OCI-LY7 (cell line): ENCODE measurements at regions of chr4 and their contacts with region 1.

Region 1: DNA sequence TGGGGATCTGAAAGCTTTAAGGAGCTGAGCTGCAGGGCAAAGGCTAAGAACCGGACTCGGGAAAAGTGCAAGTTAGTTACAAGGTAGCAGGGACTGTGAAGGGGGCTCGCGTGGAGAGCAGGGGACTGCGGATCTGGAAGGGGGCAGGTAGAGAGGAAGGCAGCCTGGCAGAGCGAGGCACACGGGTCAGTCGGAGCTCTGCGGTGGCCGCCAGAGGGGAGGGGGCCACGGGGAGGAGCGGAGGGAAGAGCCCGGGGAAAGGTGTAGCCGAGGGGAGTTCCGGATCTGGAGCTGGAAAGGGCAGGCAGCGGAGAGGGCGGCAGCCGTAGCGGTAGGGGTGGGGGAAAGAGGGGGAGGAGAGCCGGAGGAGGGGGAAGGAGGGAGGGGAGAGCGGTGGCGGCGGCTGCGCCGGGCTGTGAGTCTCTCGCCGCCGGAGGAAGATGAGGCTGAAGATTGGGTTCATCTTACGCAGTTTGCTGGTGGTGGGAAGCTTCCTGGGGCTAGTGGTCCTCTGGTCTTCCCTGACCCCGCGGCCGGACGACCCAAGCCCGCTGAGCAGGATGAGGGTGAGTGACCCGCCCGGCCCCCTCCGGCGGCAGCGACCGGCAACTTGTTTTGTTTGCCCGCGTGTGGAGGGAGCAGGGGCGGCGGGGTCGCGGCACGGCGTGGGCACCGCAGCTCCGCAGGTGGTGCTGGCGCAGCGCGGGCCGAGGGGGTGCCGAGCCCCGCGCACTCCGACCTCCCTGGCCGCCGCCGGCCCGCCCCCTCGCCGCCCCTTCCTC is at the start of gene GALNT7:
- DNase-seq: peak; percentile 74
- H3K4me3 ChIP-seq: peak within 1 kb of the TSS; percentile 79
- H3K27ac ChIP-seq: peak within 1 kb of the TSS; percentile 84
- H3K4me1 ChIP-seq: peaks cover 27% of the 10 kb centered on the region
- CTCF ChIP-seq: no peak
- total RNA-seq, gene GALNT7: 20.3 and 24.8 TPM in 2 replicates

Region 2: GRCh38 chr4:172982151-172982590 is 186.4 kb before region 1 on chr4:
- CTCF ChIA-PET with region 1: no interaction called
- POLR2A ChIA-PET with region 1: no interaction called
- intact Hi-C with region 1: no loop called
- DNase-seq: no peak
- H3K4me3 ChIP-seq: no peak overlapping the region
- H3K27ac ChIP-seq: no peak overlapping the region
- H3K4me1 ChIP-seq: no peaks in the 10 kb centered on the region
- CTCF ChIP-seq: no peak

Region 3: GRCh38 chr4:173025131-173025530 is 143.5 kb before region 1 on chr4:
- CTCF ChIA-PET with region 1: no interaction called
- POLR2A ChIA-PET with region 1: no interaction called
- intact Hi-C with region 1: loop called (anchors 5 kb)
- DNase-seq: peak; percentile 78
- H3K4me3 ChIP-seq: no peak overlapping the region
- H3K27ac ChIP-seq: no peak overlapping the region
- H3K4me1 ChIP-seq: no peaks in the 10 kb centered on the region
- CTCF ChIP-seq: peak; percentile 90

Region 4: GRCh38 chr4:173257732-173258717 is 89.4 kb after region 1 on chr4:
- CTCF ChIA-PET with region 1: no interaction called
- POLR2A ChIA-PET with region 1: interaction called, 6 read pairs
- intact Hi-C with region 1: loop called (anchors 2 kb)
- DNase-seq: peak; percentile 76
- H3K4me3 ChIP-seq: no peak overlapping the region
- H3K27ac ChIP-seq: no peak overlapping the region
- H3K4me1 ChIP-seq: peaks cover 22% of the 10 kb centered on the region
- CTCF ChIP-seq: peak; percentile 95

Region 5: DNA sequence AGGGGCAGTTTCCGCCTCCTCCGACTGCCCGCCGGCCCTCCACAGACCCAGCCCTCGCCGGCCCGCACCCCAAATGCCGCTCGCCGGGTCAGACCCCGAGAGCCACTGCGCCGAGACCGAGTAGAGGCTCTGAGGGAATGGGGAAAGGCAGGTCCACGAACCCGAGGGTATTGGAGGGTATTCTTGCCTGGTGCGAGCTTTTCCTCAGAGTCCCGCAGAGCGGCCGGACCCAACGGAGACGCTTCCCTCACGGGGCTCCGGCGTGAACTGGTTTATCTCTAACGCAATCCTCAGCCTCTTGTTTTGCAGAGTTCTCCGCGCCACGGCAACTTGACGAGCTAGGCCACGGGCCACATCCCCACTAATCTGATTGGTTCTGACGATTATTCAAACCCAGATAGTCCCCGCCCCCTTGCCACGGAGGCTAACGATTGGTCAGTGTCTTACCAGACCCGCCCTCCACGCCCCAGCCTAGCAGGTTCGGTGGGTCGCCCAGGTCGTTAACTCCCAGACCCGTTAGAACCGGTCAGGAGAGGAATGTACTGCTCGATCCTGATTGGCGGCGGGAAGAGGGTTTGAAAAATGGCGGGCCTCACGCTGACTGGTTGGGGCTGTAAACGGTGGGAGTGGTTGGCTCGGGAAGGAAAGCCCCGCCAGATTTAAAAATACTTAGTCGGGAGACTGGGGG is 165.6 kb after region 1 on chr4 and contains the start of gene HMGB2:
- CTCF ChIA-PET with region 1: no interaction called
- POLR2A ChIA-PET with region 1: interaction called, 7 read pairs
- intact Hi-C with region 1: loop called (anchors 1 kb)
- DNase-seq: peak; percentile 100
- H3K4me3 ChIP-seq: peak within 1 kb of the TSS; percentile 99
- H3K27ac ChIP-seq: peak within 1 kb of the TSS; percentile 92
- H3K4me1 ChIP-seq: peaks cover 49% of the 10 kb centered on the region
- CTCF ChIP-seq: no peak
- total RNA-seq, gene HMGB2: 697 and 1,101 TPM in 2 replicates

Region 6: GRCh38 chr4:173370477-173371291 is 202.1 kb after region 1 on chr4 and contains the start of gene SAP30:
- CTCF ChIA-PET with region 1: no interaction called
- POLR2A ChIA-PET with region 1: interaction called, 5 read pairs
- intact Hi-C with region 1: loop called (anchors 2 kb)
- DNase-seq: peak; percentile 98
- H3K4me3 ChIP-seq: peak within 1 kb of the TSS; percentile 83
- H3K27ac ChIP-seq: peak within 1 kb of the TSS; percentile 91
- H3K4me1 ChIP-seq: peaks cover 39% of the 10 kb centered on the region
- CTCF ChIP-seq: no peak
- total RNA-seq, gene SAP30: 63.5 and 86.2 TPM in 2 replicates